ENCODE measurements at regions of chr7 and their contacts with region 1.

Region 1: GRCh38 chr7:116499168-116500077 is at the start of gene CAV2:
- DNase-seq: peak; percentile 83
- ATAC-seq: peak; percentile 93
- total RNA-seq, gene CAV2: 239 TPM

Region 2: DNA sequence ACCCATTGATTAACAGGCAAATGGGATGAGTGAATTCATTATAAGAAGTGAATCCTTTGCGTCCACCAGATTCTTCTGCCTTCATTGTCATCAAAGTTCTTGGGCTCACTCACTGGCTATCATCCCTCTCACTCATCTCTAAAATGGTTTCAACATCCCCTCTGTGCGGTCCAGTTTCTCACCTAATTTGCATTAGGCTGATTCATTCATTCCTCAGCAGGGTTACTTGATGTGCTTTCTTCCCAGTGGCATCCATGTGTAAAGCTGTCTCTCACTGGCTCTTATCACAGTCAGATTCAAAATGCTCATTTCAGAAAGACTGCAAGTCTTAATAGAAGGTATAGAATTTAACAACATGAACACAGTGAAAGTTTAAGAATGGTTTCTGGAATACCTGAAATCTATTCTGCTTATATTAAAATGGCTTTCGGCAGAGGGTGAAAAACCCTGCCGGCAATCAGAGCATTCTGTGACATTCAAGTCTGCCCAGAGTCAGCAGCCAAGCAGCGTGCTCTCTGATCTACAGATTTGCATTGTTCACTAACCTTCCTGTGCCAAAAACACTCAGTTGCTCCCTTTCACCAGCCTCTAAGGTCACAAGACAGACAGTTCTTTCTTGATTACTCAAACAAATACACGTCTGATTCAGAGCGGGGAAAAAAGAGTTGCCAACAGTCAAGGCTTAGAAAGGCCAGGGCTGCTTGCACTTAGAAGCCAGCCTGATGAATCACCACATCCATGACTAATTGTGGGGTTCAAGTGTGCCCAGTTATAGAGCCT is 182.4 kb before region 1 on chr7:
- intact Hi-C with region 1: no loop called
- DNase-seq: no peak
- ATAC-seq: peak; percentile 86

Region 3: GRCh38 chr7:116403265-116403664 is 96.2 kb before region 1 on chr7:
- intact Hi-C with region 1: no loop called
- DNase-seq: no peak
- ATAC-seq: peak; percentile 46

Region 4: GRCh38 chr7:116455009-116455408 is 44.4 kb before region 1 on chr7:
- intact Hi-C with region 1: loop called (anchors 2 kb)
- DNase-seq: no peak
- ATAC-seq: no peak

Measured in Right ventricle myocardium inferior (tissue), 1 donor.